ENCODE measurements at regions of chr19 and their contacts with region 1.

Region 1: GRCh38 chr19:925526-926322 is at the start of gene ARID3A:
- DNase-seq: peak; percentile 85
- ATAC-seq: peak; percentile 42
- H3K4me3 Mint-ChIP-seq: peak within 1 kb of the TSS; percentile 70
- H3K27ac Mint-ChIP-seq: peak within 1 kb of the TSS; percentile 37
- H3K4me1 Mint-ChIP-seq: peaks cover 17% of the 10 kb centered on the region
- H3K27me3 Mint-ChIP-seq: no peaks in the 10 kb centered on the region
- total RNA-seq, gene ARID3A: 25.1 to 36.0 TPM

Region 2: GRCh38 chr19:788983-789700 is 136.6 kb before region 1 on chr19:
- CTCF ChIA-PET with region 1: no interaction called
- POLR2A ChIA-PET with region 1: no interaction called
- intact Hi-C with region 1: no loop called
- DNase-seq: no peak
- ATAC-seq: peak; percentile 30
- H3K4me3 Mint-ChIP-seq: no peak overlapping the region
- H3K27ac Mint-ChIP-seq: peak overlapping the region; percentile 38
- H3K4me1 Mint-ChIP-seq: peaks cover 2% of the 10 kb centered on the region
- H3K27me3 Mint-ChIP-seq: peaks cover 4% of the 10 kb centered on the region

Region 3: GRCh38 chr19:984165-984967 is 58.6 kb after region 1 on chr19 and contains the start of gene WDR18:
- CTCF ChIA-PET with region 1: interaction called, 26 read pairs
- POLR2A ChIA-PET with region 1: no interaction called
- intact Hi-C with region 1: loop called (anchors 1 kb)
- DNase-seq: peak; percentile 95
- ATAC-seq: peak; percentile 92
- H3K4me3 Mint-ChIP-seq: peak within 1 kb of the TSS; percentile 91
- H3K27ac Mint-ChIP-seq: peak within 1 kb of the TSS; percentile 86
- H3K4me1 Mint-ChIP-seq: peaks cover 14% of the 10 kb centered on the region
- H3K27me3 Mint-ChIP-seq: no peaks in the 10 kb centered on the region
- total RNA-seq, gene WDR18: 71.6 to 87.8 TPM

Region 4: DNA sequence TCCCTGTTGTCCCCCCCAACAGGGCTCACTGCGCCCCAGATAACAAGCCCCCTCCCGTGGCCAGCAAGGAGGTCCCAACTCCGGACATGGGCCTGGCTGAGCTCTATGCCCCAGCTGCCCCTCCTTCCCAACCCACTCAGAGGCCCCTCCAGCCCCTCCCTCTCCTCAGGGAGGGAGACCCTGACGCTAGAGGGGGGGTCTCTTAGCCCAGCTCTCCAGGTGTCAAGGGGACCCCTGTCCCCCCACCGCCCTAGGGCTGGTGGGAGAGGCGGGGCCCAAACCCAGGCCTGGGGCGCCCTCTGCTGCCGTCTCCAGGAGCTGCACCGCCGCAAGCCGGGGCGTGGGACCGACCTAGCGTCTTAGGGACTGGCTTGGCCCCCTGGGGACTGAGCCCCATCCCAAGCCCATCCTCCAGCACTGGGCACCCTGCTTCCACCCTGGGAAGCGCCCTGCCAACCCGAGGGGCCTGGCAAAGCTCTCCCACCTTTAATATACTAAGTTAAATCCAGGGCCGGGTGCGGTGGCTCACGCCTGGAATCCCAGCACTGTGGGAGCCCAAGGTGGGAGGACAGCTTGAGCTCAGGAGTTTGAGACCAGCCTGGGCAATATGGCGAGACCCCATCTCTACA is 75.9 kb after region 1 on chr19:
- CTCF ChIA-PET with region 1: interaction called, 3 read pairs
- POLR2A ChIA-PET with region 1: no interaction called
- intact Hi-C with region 1: loop called (anchors 1 kb)
- DNase-seq: peak; percentile 84
- ATAC-seq: peak; percentile 77
- H3K4me3 Mint-ChIP-seq: no peak overlapping the region
- H3K27ac Mint-ChIP-seq: no peak overlapping the region
- H3K4me1 Mint-ChIP-seq: peaks cover 5% of the 10 kb centered on the region
- H3K27me3 Mint-ChIP-seq: peaks cover 19% of the 10 kb centered on the region

Region 5: DNA sequence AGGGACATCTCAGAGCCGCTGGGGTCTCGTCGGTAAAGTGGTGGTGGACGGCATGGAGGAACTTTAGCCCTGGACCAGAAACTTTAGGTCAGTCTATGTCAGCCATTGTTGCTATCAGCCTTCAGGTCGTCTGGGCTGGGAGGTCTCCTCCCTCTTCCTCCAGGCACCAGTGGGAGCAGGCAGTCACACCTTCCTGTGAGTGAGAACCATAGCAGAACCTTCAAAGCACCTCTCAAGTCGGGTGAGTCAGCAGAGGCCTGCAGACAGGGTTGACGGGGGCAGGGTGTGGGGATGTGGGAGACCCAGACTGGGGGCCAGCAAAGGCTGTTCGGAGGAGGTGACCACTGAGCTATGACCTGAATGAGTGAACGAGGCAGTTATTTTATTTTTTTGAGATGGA is 263.7 kb after region 1 on chr19:
- CTCF ChIA-PET with region 1: no interaction called
- POLR2A ChIA-PET with region 1: no interaction called
- intact Hi-C with region 1: loop called (anchors 5 to 10 kb)
- DNase-seq: peak; percentile 85
- ATAC-seq: peak; percentile 84
- H3K4me3 Mint-ChIP-seq: peak overlapping the region; percentile 38
- H3K27ac Mint-ChIP-seq: peak overlapping the region; percentile 69
- H3K4me1 Mint-ChIP-seq: peaks cover 34% of the 10 kb centered on the region
- H3K27me3 Mint-ChIP-seq: no peaks in the 10 kb centered on the region

Region 6: DNA sequence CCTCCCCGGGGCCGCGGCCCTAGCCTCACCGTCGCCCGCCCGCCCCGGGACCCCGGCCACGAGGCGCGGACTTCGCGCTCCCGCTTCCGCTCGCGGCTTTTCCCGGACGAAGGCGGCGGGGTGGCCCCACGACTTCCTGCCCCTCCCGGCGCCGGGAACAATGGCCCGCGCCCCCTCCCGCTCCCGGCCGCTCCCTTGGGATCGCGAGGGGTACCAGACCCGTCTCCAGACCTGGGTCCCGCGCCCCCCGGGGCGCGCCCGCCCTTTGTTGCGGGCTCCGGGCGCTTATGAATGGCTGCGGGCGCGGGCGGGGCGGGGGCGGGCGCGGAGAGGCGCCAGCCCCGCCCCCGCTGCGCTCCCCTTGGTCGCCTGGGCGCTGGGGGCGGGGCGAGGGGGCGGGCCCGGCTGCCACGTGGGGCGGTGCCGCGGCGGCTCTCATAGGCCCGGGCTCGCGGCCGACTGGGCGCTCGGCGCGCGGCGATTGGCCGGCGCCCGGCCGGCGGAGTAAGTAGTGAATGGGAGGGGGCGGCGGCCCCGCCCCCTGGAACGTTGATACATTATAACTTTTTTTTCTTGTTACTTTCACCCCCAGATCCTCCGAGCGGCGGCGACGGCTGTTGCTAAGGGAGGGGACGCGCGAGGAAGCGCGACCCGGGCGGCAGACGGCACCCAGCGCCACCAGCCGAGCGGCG is 323.7 kb after region 1 on chr19:
- CTCF ChIA-PET with region 1: no interaction called
- POLR2A ChIA-PET with region 1: no interaction called
- intact Hi-C with region 1: loop called in 1 of 2 experiments (anchors 10 kb)
- DNase-seq: peak; percentile 97
- ATAC-seq: peak; percentile 53
- H3K4me3 Mint-ChIP-seq: peak overlapping the region; percentile 73
- H3K27ac Mint-ChIP-seq: no peak overlapping the region
- H3K4me1 Mint-ChIP-seq: peaks cover 9% of the 10 kb centered on the region
- H3K27me3 Mint-ChIP-seq: no peaks in the 10 kb centered on the region

Measured in activated CD4-positive, alpha-beta T cell treated with anti-CD3 and anti-CD28 coated beads for 36 hours (primary cell).